ENCODE measurements at regions of chr18 and their contacts with region 1.

Region 1: DNA sequence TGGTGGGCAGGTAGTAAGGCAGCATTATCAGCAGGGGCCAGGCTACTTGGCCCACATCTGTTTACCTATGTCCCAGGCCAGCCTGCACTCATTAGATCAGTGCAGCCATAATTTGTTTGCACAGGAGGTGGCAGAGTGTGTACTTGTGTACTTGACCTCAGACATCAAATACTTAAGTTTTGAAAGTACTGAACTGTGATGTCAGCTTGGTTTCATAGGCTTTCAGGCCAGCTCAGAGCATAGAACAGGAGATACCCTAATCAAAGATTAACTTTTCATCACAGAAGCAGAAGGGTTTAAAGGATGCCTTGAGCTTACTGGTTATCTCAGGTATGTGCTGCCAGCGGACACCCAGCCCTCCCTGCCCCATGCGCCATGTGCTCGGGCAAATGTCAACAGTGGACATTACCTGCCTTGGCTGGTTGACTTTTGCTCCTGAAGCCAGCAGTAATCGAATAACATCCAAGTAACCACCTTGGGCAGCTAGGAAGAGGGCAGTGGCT is 33.2 kb downstream of the ANKRD29 start:
- DNase-seq: no peak
- H3K4me3 ChIP-seq: no peak overlapping the region
- H3K27ac ChIP-seq: no peak overlapping the region
- H3K4me1 ChIP-seq: peaks cover 0 to 14% (median 0%) of the 10 kb centered on the region in 4 donors
- H3K27me3 ChIP-seq: no peaks in the 10 kb centered on the region
- CTCF ChIP-seq: no peak

Region 2: GRCh38 chr18:23689031-23689615 is 59.6 kb after region 1 on chr18 and contains the start of gene LAMA3:
- intact Hi-C with region 1: loop called (anchors 10 kb)
- DNase-seq: peak; percentile 40 to 71
- H3K4me3 ChIP-seq: peak within 1 kb of the TSS; percentile 55 to 58
- H3K27ac ChIP-seq: peak within 1 kb of the TSS; percentile 27 to 57
- H3K4me1 ChIP-seq: peaks cover 0 to 21% (median 14%) of the 10 kb centered on the region in 4 donors
- H3K27me3 ChIP-seq: peaks cover 0 to 9% of the 10 kb centered on the region in 2 donors
- CTCF ChIP-seq: peak in 1 of 2 experiments; percentile 19

Region 3: DNA sequence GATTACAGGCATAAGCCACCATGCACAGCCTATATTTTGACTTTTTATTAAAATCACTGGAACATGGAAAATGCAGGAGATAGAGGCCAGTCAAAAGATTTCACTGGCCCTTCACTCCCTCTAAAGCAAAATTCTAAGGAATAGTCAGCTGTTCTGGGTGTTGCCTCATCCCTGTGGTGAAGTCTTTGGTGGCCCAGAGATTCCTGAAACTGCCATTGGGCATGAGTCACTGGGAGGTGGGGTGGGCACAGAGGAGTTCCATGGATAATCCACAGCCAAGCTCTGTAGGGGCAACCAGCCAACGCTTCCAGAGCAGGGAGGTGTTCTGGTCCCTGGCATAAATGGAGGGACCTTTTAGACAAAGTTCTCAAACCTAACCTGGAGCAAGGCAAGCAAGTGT is 295.3 kb after region 1 on chr18:
- intact Hi-C with region 1: loop called (anchors 10 kb)
- DNase-seq: no peak
- H3K4me3 ChIP-seq: no peak overlapping the region
- H3K27ac ChIP-seq: no peak overlapping the region
- H3K4me1 ChIP-seq: no peaks in the 10 kb centered on the region
- H3K27me3 ChIP-seq: no peaks in the 10 kb centered on the region
- CTCF ChIP-seq: no peak

Region 4: DNA sequence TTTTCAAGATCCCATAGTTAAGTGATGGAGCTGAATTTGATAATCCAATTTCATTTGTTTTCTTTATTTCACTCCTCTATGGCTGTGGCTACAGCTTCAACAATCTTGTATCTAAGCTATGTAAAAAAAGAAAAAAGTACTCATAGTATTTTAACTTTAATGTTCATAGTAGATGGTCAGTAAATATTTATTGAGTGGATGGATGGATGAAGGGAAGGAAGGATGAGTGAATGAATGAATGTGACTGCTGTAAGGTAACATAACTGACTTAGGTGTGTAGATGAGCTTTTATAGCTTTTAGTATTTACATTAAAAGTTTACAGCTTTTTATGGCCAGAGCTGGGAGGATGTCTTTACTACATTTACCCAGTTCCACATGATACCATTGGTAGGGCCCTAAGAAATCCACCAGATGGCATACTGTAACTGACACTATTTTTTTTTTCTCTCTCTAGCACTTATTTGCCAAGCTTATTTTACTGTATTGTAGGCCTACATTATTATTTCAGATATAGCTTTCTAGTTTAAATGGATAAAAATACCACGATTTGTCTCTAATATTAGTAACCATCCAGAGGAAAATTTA is 817.6 kb after region 1 on chr18:
- intact Hi-C with region 1: no loop called
- DNase-seq: no peak
- H3K4me3 ChIP-seq: no peak overlapping the region
- H3K27ac ChIP-seq: no peak overlapping the region
- H3K4me1 ChIP-seq: no peaks in the 10 kb centered on the region
- H3K27me3 ChIP-seq: no peaks in the 10 kb centered on the region
- CTCF ChIP-seq: no peak

Measured in tibial artery (tissue), 4 donors.